PC-9 (cell line): ENCODE measurements at regions of chr4 and their contacts with region 1.

Region 1: GRCh38 chr4:77385124-77385969 is 220.3 kb upstream of the CXCL13 start:
- DNase-seq: peak in 1 of 2 experiments; percentile 31
- H3K4me3 ChIP-seq: no peak overlapping the region
- H3K27ac ChIP-seq: no peak overlapping the region
- H3K4me1 ChIP-seq: no peaks in the 10 kb centered on the region
- H3K27me3 ChIP-seq: no peaks in the 10 kb centered on the region
- CTCF ChIP-seq: peak; percentile 76

Region 2: DNA sequence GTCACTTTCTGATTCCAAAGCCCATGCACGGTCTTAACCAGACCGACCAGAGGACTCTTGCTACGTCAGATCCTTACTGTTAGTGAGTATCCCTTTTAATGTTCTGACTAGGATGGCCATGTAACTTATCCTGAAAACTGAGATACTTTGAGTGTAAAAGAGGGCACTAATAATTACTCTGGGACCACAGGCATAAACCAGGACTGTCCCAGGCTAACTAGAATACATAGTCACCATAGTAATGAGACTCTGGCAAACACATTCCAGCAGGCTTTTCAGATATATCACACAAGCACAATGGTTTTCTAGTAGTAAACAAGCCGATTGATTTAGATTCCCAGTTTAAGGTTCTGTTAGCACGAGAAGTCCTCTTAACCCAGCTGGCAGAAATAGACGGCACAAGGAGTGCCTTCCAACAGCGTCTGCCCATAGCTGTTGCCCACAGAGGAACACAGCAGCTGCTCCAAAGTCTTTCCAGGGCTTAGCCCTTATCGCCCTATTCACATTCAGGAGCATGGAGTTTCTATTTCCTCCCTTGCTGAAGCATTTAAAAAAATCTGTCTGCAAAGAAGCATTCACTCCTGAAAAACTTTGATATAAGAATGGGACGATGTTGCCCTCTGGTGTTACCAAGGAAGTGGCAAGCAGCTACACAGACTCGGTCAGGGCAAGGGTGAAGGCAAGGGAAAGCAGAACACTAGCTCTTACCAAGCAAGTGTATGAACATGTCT is 312.7 kb after region 1 on chr4:
- CTCF ChIA-PET with region 1: no interaction called
- POLR2A ChIA-PET with region 1: no interaction called
- intact Hi-C with region 1: loop called (anchors 1 kb)
- DNase-seq: peak in 1 of 2 experiments; percentile 9
- H3K4me3 ChIP-seq: no peak overlapping the region
- H3K27ac ChIP-seq: no peak overlapping the region
- H3K4me1 ChIP-seq: peaks cover 31% of the 10 kb centered on the region
- H3K27me3 ChIP-seq: no peaks in the 10 kb centered on the region
- CTCF ChIP-seq: peak; percentile 49